ENCODE measurements at regions of chr17 and their contacts with region 1.

Region 1: GRCh38 chr17:47802341-47803022 is 19.1 kb downstream of the OSBPL7 start:
- DNase-seq: no peak
- ATAC-seq: peak; percentile 23 to 52
- H3K4me3 ChIP-seq: no peak overlapping the region
- H3K27ac ChIP-seq: no peak overlapping the region
- H3K4me1 ChIP-seq: peaks cover 2% of the 10 kb centered on the region
- H3K27me3 ChIP-seq: no peaks in the 10 kb centered on the region

Region 2: DNA sequence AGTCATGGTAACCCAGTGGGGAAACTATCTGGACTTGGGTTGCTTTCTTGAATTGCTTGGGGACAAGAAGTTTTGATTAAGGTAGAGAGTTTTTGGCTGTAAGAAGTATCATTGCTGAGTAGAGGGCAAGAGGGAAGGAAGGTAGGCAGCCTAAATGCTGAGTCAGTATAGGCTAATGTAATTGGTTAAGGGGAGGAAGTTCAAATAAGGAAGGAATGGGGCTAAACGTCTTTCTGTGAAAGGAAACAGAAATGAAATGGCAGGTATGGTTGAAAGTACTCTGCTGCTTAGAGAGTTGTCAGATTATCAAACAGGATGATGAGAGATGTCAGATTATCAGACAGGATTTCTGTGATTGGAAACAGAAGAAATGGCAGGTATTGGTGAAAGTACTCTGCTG is 132.4 kb before region 1 on chr17:
- intact Hi-C with region 1: loop called in 2 of 4 experiments (anchors 10 kb)
- DNase-seq: no peak
- ATAC-seq: no peak
- H3K4me3 ChIP-seq: no peak overlapping the region
- H3K27ac ChIP-seq: no peak overlapping the region
- H3K4me1 ChIP-seq: no peaks in the 10 kb centered on the region
- H3K27me3 ChIP-seq: no peaks in the 10 kb centered on the region

Measured in right cardiac atrium (tissue), 5 donors.